Panc1 (cell line): ENCODE measurements at regions of chr14 and their contacts with region 1.

Region 1: DNA sequence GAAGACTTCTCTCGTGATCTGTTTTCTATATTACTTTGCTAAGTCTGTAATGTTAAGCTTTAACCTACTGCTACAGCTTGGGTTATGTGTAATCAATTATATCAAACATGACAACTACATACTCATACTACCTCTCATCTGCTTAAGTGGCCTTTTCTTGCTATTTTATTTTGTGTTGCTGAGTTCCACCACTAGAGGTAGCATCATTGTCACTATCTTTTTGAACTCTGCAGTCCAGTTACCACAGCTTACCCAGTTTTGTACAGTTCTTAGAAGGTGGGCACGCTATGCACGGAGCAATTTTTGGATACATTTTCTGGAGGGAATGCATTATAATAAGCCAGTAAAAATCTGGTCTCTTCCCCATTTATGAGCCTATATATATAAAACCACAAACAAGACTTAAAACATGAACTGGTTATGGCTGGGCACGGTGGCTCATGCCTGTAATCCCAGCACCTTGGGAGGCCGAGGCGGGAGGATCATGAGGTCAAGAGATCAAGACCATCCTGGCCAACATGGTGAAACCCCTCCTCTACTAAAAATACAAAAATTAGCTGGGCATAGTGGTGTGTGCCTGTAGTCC is 48.5 kb downstream of the SAV1 start:
- DNase-seq: peak; percentile 51
- ATAC-seq: no peak; the same call in 1 of the 2 replicates
- H3K4me3 ChIP-seq: no peak overlapping the region
- H3K27ac ChIP-seq: no peak overlapping the region
- H3K4me1 ChIP-seq: no peaks in the 10 kb centered on the region
- H3K27me3 ChIP-seq: no peaks in the 10 kb centered on the region
- CTCF ChIP-seq: peak; percentile 64

Region 2: DNA sequence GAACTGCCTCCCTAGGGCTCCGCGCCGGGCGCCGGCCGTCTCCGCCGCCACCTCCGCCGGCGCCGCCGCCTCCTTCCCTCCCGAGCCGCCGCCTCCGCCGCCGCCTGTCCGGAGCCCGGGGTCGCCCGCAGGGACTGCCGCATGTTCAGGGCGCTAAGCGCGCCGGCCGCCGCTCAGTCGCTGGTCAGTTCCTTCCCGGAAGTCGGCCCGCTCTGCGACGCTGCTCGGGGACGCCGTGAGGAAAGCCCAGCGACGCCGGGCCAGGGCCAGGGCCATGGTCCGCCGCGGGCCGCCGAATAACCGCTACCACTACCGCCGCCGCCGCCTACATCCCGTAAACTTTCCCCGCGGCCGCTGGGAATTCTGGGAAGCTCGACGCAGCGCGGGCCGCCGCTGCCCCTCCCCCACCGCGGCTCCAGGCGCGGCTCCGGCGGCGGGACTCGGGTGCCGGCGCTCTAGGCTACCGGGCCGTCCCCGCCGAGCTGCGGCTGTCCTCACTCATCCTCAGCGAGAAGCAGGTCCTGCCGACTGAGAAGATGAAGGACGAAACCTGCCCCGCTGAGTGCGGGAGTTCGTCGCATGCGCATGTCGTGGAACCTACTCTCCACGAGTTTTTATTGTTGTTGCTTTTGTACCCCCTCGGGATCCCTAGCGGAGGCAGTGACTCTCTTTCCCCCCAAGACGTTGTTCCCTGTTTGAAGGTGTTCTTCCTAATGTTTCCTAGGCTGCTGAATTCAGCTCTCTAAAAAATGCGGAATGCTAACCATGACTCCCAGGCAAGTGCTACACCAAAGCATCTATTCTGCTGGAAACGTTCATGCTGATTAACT is 48.6 kb after region 1 on chr14 and contains the start of gene SAV1:
- CTCF ChIA-PET with region 1: no interaction called
- POLR2A ChIA-PET with region 1: interaction called, 12 read pairs
- in situ Hi-C with region 1: no loop called
- intact Hi-C with region 1: no loop called
- DNase-seq: peak; percentile 25
- ATAC-seq: peak; percentile 93
- H3K4me3 ChIP-seq: peak within 1 kb of the TSS; percentile 75 to 88
- H3K27ac ChIP-seq: peak within 1 kb of the TSS; percentile 92
- H3K4me1 ChIP-seq: peaks cover 13% of the 10 kb centered on the region; the same call in 1 of the 2 replicates
- H3K27me3 ChIP-seq: no peaks in the 10 kb centered on the region
- CTCF ChIP-seq: no peak
- total RNA-seq, gene SAV1: 13.2 TPM

Region 3: GRCh38 chr14:50784683-50785456 is 165.2 kb after region 1 on chr14:
- CTCF ChIA-PET with region 1: no interaction called
- POLR2A ChIA-PET with region 1: no interaction called
- in situ Hi-C with region 1: no loop called
- intact Hi-C with region 1: loop called (anchors 5 kb)
- DNase-seq: no peak
- ATAC-seq: no peak
- H3K4me3 ChIP-seq: no peak overlapping the region
- H3K27ac ChIP-seq: no peak overlapping the region
- H3K4me1 ChIP-seq: no peaks in the 10 kb centered on the region
- H3K27me3 ChIP-seq: no peaks in the 10 kb centered on the region
- CTCF ChIP-seq: no peak